ENCODE measurements at regions of chr10 and their contacts with region 1.

Region 1: GRCh38 chr10:95693668-95694534 is at the start of gene TCTN3:
- DNase-seq: peak; percentile 95 to 100 (median 97)

Region 2: GRCh38 chr10:95831515-95831914 is 137.6 kb after region 1 on chr10:
- intact Hi-C with region 1: no loop called
- DNase-seq: no peak

Region 3: GRCh38 chr10:95841661-95842498 is 148.0 kb after region 1 on chr10:
- intact Hi-C with region 1: loop called (anchors 1 kb)
- DNase-seq: peak in 1 of 10 donors; percentile 11

Region 4: DNA sequence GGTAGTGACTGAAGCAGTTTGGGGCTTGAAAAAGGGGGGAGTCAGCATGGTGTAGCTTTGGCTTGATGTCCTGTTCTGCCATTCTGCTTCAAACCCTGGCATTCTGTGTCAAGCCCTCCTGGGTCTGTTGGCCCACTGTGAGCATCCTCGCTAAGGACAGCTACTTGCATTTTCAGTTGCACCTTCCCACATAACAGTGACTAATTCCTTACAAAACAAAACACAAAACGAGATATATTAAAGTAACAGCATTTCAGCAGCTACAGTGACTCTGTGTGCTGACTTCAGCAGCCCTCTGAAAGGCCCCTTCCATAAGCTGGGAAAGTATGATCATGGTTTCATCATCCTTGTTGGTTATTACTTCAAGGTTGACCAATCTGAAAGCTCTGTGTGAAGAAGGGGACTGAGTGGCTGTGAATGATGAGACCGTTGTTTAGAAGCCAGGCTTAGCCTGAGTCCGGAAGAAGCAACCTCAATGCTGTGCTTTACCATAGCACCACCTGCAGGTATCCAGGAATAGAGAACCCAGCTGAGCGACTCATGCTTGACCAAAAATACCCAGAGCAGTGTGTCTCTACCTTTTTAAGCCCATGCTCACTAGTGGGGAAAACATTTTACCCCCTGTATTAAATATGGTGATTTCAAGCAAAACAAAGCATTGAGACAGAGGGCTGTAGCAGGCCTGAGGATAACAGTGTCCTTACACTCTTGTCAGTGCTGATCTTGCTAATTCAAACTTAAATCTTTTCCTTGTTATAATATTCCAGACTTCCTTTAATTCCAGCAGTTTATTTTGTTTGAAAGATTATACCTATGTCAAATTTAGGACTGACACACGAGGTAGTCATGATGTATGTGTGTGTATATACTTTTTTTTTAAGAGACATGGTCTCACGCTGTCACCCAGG is 171.3 kb after region 1 on chr10:
- intact Hi-C with region 1: loop called (anchors 1 kb)
- DNase-seq: peak in 6 of 10 donors; percentile 9 to 85 (median 36)

Region 5: DNA sequence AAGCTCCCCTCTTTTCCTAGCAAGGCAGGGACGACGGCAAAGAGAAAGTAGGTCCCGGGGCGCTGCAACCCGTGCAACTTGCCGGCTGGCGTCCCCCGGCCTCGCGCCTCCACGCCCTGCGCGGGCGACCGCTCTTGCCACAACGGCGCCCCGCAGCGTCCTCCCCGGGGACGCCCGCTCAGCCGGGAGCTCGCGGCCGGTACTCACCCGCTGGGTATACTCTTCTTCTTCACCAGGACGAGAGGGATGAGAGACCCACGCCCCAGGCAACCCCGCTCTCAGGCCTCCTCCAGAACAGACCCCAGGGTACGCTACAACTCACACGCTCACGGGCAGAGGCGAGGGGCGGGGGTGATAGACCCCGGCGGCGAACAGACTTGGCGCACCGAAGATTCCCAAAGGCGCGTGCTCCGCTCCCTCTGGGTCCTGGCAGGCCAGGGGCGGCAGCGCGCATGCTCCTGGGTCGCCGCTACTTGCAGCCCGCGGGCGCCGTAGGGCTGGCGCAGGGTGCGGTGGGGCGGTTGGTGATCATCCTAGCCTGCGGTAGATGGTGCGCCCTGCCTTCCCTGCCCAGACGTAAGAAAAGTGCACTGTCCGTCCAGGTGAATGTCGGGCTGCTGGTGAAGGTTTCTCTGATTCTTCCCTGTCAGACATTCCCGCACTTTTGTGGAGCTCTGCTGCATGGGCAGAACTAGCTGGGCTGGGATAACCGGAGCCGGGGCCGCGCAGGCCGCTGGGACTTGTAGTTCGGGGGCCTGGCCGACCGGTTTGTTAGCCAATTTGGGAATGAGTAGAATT is 213.8 kb after region 1 on chr10 and contains the start of gene CC2D2B:
- intact Hi-C with region 1: loop called (anchors 5 kb)
- DNase-seq: peak; percentile 81 to 98 (median 87)

Region 6: DNA sequence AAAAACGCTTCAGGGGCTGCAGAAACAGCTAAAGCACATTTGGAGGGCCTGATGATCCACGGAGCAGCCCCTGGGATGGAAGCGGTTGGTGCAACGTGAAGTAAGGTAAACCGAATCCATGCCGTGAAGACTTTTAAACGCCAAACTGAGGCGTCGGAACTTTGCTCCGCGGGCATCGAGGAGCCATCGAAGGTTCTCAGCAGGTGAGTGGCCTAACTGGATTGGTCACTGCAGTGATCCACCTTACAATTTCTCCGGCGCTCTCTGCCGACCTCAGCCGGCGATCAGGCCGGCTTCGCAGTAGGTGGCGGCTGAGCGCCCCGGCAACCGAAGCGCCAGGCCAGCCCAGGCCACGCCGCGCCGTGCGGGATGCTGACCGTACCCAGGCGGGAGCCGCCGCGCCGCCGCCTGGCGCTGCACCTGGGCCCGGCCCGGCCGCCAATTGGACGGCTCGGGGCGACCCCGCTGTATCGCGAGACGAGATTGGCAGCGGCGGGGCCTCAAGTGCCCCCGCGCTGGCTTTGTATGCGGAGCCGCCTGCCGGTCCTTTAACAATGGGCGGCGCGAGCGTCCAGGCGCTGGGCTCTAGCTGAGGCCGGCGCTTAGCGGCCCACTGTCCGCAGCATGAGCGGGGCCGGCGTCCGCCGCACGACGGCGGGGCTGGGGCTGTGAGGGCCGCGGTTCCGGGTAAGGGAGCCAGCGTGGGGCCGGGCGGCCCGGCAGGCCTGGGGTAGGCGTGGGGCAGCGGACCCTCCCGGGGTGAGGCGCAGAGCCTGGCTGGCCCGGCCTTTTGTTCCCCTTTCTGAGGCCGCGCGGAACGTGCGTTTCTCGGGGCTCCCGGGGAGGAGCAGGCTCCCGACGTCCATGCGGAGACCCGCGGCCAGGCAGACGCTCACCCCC is 349.4 kb after region 1 on chr10 and contains the start of gene CCNJ:
- intact Hi-C with region 1: loop called (anchors 5 kb)
- DNase-seq: peak; percentile 69 to 97 (median 84)

Region 7: DNA sequence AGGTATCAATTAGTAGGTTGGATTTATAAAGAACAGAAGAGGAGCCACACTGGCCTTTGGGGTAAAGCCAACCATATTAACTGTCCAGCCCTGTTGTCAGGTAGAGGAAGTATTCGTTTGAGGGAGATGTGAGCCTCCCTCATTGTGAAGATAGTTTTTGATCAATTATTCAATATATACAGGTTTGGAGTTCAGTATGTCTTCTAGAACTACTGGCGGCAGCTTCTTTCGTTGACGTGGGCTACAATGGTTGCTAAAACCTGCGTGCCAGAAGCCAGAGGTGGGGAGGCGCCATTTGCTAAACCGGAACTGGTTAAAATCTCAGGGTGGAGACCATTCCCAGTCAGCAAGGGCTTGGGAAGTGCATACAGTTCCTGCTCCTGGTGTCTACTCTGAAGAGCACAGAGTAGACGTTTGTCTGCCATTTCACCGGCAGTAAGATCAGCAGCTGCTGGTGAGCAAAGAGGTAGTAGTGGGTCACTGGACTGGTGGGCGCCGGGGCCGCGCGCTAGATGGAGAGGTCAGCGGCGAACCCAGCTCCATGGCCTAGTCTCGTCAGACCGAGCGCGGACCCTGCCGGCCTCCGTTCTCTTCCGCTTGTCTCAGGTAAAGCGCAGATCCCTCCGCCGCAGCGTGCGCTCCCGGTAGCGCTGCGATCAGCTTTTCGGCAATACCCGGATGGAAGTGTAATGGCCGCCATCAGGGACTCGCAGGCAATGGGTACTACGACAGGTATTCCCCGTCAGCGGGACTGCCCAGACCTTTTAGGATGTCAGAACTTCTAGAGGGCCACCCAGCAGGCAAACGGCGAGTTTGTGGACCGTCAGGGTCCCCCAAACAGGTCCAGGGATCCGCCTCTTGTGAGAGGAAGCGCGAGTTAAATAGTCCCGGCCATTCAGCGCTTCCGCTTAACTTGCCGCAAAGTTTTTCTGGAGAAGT is 435.8 kb after region 1 on chr10 and contains the start of gene ZNF518A:
- intact Hi-C with region 1: loop called (anchors 5 kb)
- DNase-seq: peak; percentile 82 to 97 (median 89)

Region 8: GRCh38 chr10:96292971-96293920 is 599.3 kb after region 1 on chr10:
- intact Hi-C with region 1: loop called (anchors 10 kb)
- DNase-seq: peak in 2 of 10 donors; percentile 16 to 23

Region 9: DNA sequence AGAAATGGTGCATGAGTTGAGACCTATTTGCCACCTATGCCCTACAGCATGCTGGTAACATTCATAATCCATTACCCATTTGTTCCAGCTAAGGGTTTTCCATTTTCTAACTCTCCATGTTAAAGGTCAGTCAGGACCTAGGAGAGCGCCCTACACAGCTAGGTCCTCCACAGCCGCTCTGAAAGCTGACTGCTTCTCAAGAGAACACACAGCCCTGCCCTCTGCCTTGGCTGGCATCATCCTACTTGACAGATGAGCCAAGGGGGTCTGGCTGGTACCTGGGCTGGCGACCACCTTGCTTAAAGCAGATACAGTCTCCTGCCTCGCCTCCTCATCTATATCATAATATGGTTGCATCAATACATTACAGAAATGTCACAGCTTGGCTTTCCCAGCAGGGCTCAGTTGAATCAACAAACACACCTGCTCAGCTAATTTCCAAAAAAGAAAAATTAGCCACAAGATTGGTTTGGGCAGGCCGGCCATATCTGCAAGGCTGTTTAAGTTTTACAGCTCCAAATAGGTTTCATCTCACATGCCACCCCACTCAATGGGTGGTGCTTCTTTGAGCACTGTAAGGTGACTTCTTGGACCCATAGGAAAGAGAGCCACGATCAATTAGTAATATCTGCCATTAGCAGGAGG is 802.5 kb after region 1 on chr10:
- intact Hi-C with region 1: no loop called
- DNase-seq: no peak

Region 10: DNA sequence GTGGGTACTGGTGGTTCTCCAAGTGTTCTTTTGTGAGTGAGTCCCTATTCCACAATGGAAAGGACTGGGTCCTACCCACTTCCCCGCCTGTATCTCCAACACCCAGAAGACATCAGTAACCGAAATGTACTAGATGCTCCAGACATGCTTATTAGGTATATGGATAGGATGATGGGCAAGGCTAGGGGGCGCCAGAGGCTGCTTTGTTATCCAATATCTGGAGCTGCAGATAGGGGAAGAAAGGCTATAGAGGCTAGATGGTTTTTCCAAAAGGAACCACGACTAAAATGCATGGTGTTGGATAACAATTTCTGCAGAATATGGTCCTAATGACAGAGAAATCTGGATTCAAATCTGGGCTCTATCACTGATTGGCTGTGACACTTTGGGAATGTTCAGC is 949.1 kb after region 1 on chr10:
- intact Hi-C with region 1: no loop called
- DNase-seq: peak in 7 of 10 donors; percentile 46 to 92 (median 60)